ENCODE measurements at regions of chr7 and their contacts with region 1.

Region 1: DNA sequence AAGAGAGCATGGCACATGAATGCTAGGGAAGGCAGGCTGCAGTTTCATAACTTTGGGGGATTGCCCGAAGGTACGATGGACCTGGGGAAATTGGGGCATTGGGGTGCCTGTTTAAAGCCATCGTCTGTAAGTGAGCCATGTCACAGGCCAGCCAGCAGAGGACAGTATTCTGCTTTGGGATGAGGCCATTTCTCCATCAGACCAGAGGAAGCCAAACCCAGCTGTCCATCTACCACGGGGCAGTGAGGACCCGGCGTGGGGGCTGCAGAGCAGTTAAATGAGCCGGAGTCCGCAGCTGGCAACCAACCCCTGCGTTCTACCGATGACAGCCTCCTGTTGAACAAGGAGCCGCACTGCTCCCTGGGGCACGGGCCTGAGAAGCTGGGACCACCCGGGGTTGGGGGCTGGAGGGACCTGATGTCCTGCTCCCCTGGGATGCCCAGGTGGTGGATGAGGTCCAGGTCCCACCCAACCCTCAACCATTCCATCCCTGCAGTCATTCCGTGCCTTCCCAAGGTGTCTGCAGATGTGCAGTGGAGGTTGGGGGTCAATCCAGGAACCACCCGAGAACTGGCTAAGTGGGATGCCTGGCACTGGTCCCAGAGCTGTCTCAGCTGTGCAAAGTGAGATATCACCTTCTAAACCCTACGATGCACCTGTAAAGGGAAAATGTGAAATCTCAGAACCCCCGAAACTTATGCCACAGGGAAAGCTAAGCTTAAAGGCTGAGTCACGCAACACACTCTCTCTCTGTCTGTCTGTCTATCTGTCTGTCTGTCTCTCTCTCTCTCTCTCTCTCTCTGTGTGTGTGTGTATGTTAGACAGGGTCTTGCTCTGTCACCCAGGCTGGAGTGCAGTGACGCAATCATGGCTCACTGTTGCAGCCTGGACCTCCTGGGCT is 12.1 kb upstream of the RHBDD2 start:
- DNase-seq: peak; percentile 56
- ATAC-seq: peak; percentile 97

Region 2: DNA sequence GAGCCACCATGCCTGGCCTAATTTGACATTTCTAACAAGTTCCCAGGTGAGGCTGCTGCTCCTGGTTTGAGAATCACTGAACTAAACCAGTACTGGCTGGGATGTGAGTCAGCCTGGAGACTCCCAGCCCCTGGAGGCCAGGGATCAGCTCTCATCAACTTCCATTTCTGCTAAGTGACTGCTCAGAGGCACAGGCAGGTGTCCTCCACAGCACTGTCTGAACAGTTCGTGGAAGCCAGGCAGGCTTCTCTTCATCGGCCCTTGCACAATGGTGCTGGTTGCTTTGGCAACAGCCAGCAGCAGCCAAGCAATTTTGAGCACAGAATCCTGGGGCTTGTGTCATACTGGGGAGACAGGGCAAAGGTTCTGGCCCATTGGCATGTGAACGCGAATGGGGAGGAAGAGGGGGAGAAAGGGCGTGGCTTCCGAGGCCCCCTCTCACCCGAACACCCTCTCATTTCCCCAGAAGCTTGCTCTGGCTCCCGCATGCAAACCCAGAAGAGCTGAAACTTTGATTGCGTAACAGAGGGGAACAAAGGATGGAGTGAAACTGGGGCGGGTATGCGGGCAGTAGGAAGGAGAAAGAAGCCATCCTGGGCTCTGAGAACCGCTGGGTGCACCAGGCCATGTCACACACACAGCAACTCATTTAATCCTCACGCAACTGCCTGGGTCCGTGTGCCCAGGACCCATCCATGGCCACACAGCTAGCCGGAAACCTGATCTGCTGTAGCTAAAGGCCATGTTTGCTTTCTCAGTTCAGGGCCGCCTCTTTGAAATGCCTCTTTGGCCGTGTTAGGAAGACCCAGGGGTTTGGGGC is 39.3 kb after region 1 on chr7:
- intact Hi-C with region 1: no loop called
- DNase-seq: peak; percentile 19 to 58
- ATAC-seq: peak; percentile 26

Region 3: GRCh38 chr7:76020031-76020714 is 153.4 kb after region 1 on chr7:
- intact Hi-C with region 1: loop called (anchors 5 to 10 kb)
- DNase-seq: peak; percentile 45 to 85
- ATAC-seq: peak; percentile 97

Measured in left colon (tissue), 2 donors.